ENCODE measurements at regions of chr15 and their contacts with region 1.

Region 1: DNA sequence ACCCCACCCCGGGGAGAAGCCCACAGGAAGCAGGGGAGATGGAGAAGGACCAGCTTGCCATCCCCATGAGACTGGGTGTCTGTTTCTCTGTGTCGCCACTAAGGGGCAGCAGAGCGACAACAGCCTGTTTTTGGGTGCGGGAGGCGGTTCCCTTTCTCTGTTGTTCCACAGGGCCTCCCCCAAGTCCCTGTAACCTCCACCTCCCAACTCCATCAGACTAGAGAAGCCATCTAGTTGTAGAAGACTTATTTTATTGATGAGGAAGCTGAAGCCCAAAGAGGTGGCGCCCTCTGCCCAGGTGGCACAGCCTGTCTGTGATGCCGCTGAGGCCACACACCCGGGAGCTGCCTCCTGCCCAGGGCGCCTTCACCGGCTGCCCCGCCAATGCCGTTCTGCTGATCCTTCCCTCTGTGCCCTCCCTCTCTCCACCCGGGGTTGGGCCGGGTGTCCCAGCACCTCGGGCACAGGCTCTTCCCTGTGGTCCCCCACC is 3.9 kb upstream of the CCDC9B start:
- DNase-seq: peak; percentile 45
- H3K4me3 ChIP-seq: no peak overlapping the region
- H3K27ac ChIP-seq: no peak overlapping the region
- H3K4me1 ChIP-seq: peaks cover 50% of the 10 kb centered on the region
- H3K27me3 ChIP-seq: no peaks in the 10 kb centered on the region
- CTCF ChIP-seq: peak; percentile 82 to 83

Region 2: GRCh38 chr15:40238532-40239403 is 105.9 kb before region 1 on chr15 and contains the start of gene PAK6:
- CTCF ChIA-PET with region 1: no interaction called
- dilution Hi-C with region 1: no loop called
- in situ Hi-C with region 1: no loop called
- intact Hi-C with region 1: no loop called
- DNase-seq: peak; percentile 95
- H3K4me3 ChIP-seq: peak within 1 kb of the TSS; percentile 23 to 73 (median 61)
- H3K27ac ChIP-seq: peak within 1 kb of the TSS; percentile 75
- H3K4me1 ChIP-seq: peaks cover 73% of the 10 kb centered on the region
- H3K27me3 ChIP-seq: no peaks in the 10 kb centered on the region
- CTCF ChIP-seq: no peak
- total RNA-seq, gene PAK6: 13.7 to 33.8 TPM

Region 3: GRCh38 chr15:40357723-40358470 is 13.2 kb after region 1 on chr15 and contains the start of gene DISP2:
- CTCF ChIA-PET with region 1: no interaction called
- dilution Hi-C with region 1: no loop called
- in situ Hi-C with region 1: no loop called
- intact Hi-C with region 1: loop called (anchors 1 kb)
- DNase-seq: peak; percentile 71
- H3K4me3 ChIP-seq: peak within 1 kb of the TSS; percentile 37 to 53 (median 52)
- H3K27ac ChIP-seq: no peak within 1 kb of the TSS
- H3K4me1 ChIP-seq: peaks cover 32% of the 10 kb centered on the region
- H3K27me3 ChIP-seq: no peaks in the 10 kb centered on the region
- CTCF ChIP-seq: no peak
- total RNA-seq, gene DISP2: under 0.01 to 1.6 TPM

Region 4: GRCh38 chr15:40367686-40368611 is 23.3 kb after region 1 on chr15:
- CTCF ChIA-PET with region 1: interaction called, 4 read pairs
- dilution Hi-C with region 1: no loop called
- in situ Hi-C with region 1: no loop called
- intact Hi-C with region 1: loop called (anchors 1 kb)
- DNase-seq: peak; percentile 88
- H3K4me3 ChIP-seq: no peak overlapping the region
- H3K27ac ChIP-seq: no peak overlapping the region
- H3K4me1 ChIP-seq: peaks cover 19% of the 10 kb centered on the region
- H3K27me3 ChIP-seq: no peaks in the 10 kb centered on the region
- CTCF ChIP-seq: peak; percentile 60 to 64

Region 5: DNA sequence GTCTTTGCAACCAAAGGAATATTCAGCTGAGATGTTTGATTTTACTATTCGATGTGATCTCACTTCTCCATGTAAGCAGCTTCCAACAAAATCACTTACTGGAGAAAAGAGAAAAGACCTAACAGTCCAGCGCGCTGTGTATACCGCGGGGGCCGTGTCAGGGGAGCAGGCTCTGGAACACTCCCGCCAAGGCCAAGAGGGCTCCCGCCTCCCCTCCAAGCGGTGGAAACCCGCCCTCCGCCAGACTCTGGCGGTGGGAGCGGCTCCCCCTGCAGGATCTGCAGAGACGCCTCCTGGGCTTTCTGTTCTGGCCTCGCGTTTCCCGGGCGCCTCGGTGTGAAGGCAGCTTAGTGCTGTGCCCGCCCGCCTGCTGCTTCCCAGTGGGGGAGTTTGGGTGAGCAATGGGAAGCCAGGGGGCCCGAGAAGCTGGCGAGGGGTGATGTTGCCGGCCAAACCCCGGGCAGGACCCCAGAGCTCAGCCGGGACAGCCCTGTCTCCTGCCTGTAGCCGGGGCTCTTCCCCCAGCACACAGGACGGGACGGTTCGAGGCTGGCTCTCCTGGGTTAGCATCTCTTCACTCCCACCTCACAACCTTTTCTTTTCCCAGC is 162.4 kb after region 1 on chr15:
- CTCF ChIA-PET with region 1: no interaction called
- dilution Hi-C with region 1: no loop called
- in situ Hi-C with region 1: no loop called
- intact Hi-C with region 1: loop called (anchors 10 kb)
- DNase-seq: peak; percentile 52
- H3K4me3 ChIP-seq: peak overlapping the region in 1 of 3 experiments; percentile 22
- H3K27ac ChIP-seq: no peak overlapping the region
- H3K4me1 ChIP-seq: peaks cover 19% of the 10 kb centered on the region
- H3K27me3 ChIP-seq: no peaks in the 10 kb centered on the region
- CTCF ChIP-seq: peak; percentile 47 to 76

Measured in mammary epithelial cell (primary cell).